ENCODE measurements at regions of chr2 and their contacts with region 1.

Region 1: DNA sequence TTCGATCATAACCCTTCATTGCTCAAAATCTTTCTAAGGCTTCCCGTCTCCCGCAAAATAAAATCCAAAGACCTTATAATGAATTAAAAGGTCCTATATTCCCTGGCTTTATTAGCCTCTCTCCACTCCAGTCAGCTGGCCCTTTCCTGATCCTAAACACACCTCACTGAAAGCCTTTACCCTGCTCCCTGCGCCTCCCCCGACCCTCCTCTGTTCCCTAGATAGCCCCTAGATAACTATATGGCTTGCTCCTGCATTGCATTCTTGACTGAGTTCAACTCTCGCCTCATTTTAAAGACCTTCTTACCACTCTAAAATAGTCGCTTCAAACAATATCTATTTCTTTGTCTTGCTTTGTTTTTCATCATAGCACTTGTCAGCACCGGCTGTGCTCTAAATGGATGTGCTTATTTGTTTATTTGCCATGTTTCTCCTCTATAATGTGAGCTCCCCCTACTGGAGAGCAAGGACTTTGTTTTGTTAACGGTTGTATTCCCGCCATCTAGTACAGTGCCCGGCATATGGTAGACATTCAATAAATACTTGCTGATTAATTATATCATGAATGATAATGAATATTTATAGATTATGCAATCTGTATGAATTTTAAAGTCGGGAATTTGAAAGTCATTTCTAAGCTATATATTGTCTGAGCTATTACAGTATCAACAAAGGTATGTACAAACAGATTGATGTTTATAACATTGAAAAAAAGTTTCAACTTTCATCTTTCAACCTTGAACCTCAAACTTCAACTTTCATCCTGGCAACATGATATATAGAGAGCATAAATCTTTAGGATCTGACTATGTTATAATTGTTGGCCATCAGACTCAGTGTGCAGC is 32.4 kb upstream of the VIT start:
- DNase-seq: no peak
- H3K4me3 ChIP-seq: peak overlapping the region in 2 of 4 experiments; percentile 21 to 49; a peak in 2 of 8 replicates
- H3K27ac ChIP-seq: no peak overlapping the region
- H3K4me1 ChIP-seq: peaks cover 0 to 4% (median 2%) of the 10 kb centered on the region in 4 experiments; a peak in 1 of 7 replicates
- H3K27me3 ChIP-seq: no peaks in the 10 kb centered on the region
- CTCF ChIP-seq: peak in 2 of 3 experiments; percentile 68 to 74; a peak in 3 of 4 replicates
- EP300 ChIP-seq: no peak
- POLR2A ChIP-seq: no peak
- RAD21 ChIP-seq: peak; percentile 88 to 89

Region 2: GRCh38 chr2:36287363-36288275 is 376.5 kb before region 1 on chr2:
- CTCF ChIA-PET with region 1: no interaction called
- POLR2A ChIA-PET with region 1: no interaction called
- DNase-seq: no peak
- H3K4me3 ChIP-seq: no peak overlapping the region
- H3K27ac ChIP-seq: no peak overlapping the region
- H3K4me1 ChIP-seq: peaks cover 0 to 4% (median 1%) of the 10 kb centered on the region in 4 experiments; a peak in 2 of 7 replicates
- H3K27me3 ChIP-seq: no peaks in the 10 kb centered on the region
- CTCF ChIP-seq: no peak
- EP300 ChIP-seq: no peak
- POLR2A ChIP-seq: no peak
- RAD21 ChIP-seq: no peak

Region 3: DNA sequence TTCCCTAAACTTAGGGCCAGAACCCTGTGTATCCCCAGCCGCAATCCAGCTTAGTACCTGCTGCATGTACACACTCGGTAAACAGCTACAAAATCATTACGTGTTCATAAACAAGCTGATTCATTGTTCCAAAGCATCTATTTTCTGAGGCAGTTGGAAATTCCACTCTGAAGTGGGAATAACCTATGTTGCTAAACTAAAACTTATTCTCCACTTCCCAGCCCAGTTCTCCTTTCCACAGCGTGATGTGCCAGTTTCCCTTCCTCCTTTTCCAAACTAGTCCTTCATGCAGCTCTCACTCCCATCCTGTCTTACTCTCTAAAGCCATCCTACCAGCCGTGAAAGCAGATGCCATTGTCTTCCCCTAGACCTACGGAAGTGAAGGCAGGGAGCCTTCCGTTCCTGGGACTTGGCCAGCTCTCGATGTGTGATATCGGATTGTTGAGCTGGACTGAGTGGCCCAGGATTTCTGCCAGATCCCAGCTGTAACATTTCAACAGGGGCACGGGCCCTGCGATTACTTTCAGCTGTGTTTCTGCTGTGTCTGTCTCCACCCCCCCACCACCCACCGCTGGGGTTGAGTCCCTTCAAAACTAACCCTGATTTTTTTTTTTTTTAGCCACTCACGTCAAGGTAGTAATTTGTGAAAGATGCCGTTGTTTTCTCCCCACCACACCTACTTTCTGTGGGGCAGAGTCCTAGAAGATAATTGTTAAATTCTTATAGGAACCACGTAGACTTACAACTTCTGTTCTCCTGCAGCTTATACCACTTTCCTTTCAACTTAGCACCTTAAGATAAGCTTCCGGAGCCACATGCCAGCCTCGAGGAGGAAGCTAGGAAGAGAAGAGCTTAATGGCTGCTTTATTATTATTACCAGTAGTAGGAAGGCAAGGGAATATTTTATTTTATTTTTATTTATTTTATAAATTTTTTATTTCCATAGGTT is 207.6 kb before region 1 on chr2:
- CTCF ChIA-PET with region 1: no interaction called
- POLR2A ChIA-PET with region 1: no interaction called
- DNase-seq: no peak
- H3K4me3 ChIP-seq: no peak overlapping the region; a peak in 1 of 8 replicates
- H3K27ac ChIP-seq: no peak overlapping the region
- H3K4me1 ChIP-seq: peaks cover 7 to 32% (median 32%) of the 10 kb centered on the region in 4 experiments
- H3K27me3 ChIP-seq: no peaks in the 10 kb centered on the region
- CTCF ChIP-seq: no peak
- EP300 ChIP-seq: no peak
- POLR2A ChIP-seq: no peak
- RAD21 ChIP-seq: no peak

Region 4: DNA sequence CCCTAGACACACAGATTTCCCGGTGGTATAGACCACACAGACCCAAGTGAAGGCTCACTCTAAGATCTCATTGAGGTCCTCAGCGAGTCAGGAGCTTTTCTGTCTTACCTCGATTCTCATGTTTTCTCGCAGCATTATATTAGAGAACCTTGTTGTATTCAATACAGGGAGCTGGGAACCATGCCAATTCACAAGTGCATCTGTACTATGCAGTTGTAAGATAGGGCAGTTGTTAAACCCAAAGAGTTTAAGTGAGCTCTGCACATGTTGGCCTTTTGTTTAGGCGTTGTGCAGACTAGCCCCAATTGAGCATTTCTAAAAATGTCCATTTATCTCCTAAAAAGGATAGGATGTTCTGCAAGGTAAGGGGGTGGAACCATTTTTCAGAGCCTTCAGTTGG is 125.7 kb before region 1 on chr2:
- CTCF ChIA-PET with region 1: interaction called, 14 read pairs
- POLR2A ChIA-PET with region 1: no interaction called
- DNase-seq: no peak
- H3K4me3 ChIP-seq: no peak overlapping the region
- H3K27ac ChIP-seq: no peak overlapping the region
- H3K4me1 ChIP-seq: no peaks in the 10 kb centered on the region
- H3K27me3 ChIP-seq: no peaks in the 10 kb centered on the region
- CTCF ChIP-seq: no peak
- EP300 ChIP-seq: no peak
- POLR2A ChIP-seq: no peak
- RAD21 ChIP-seq: no peak

Region 5: DNA sequence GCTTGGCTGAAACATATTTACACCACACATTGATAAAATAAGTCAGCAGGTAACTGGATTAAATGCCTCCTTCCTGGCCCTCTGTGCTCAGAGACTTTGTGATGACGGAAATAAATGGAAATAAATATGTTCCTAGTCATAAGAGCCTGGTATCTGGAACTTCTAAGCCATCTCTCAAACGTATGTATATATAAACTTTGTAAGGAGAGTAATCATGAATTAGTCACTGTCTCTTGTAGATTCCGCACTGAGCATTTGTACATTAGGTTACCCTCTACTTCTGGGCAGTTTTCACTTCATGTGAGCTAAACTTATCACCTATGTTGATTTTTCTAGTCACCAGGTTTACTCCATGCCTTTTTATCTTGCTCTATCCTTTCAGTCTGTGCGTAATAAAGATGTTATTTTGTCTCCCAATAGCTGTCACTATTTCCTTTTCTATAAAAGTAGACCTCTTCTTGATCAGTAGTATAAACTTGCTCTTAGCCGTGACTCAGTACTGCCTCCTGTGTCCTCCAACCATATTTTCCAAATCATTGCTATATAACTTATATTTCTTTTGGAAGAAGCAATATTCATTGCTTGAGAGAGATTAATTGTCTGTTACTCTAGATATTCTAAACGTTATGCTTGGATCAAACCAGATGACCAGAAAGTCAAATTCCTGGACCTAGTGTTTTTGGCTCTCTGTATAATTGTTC is 119.3 kb before region 1 on chr2:
- CTCF ChIA-PET with region 1: interaction called, 17 read pairs
- POLR2A ChIA-PET with region 1: no interaction called
- DNase-seq: no peak
- H3K4me3 ChIP-seq: no peak overlapping the region
- H3K27ac ChIP-seq: no peak overlapping the region
- H3K4me1 ChIP-seq: no peaks in the 10 kb centered on the region
- H3K27me3 ChIP-seq: no peaks in the 10 kb centered on the region
- CTCF ChIP-seq: peak in 1 of 3 experiments; percentile 33; a peak in 2 of 4 replicates
- EP300 ChIP-seq: no peak
- POLR2A ChIP-seq: no peak
- RAD21 ChIP-seq: peak; percentile 23 to 38; a peak in 2 of 4 replicates

Region 6: DNA sequence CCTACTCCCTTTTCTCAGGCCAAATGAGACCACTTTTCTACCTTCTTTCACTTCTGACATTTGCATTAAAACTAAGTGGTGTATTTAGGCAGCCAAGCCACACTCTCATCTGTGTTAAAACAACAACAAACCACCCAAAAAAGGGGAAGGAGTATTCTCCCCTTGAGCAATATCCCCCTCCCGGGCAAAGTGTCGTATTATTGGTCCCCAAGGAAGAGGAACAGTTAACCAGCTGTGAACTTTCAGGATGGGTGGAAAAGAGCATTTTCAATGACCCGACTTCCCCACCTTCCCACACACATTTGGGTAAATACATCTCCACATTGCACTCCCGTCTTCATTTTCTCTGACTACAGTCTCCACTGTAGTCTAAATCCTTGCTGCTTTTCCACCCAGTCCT is 110.4 kb before region 1 on chr2:
- CTCF ChIA-PET with region 1: interaction called, 15 read pairs
- POLR2A ChIA-PET with region 1: interaction called, 4 read pairs
- DNase-seq: no peak
- H3K4me3 ChIP-seq: no peak overlapping the region
- H3K27ac ChIP-seq: no peak overlapping the region
- H3K4me1 ChIP-seq: peaks cover 0 to 2% (median 0%) of the 10 kb centered on the region in 4 experiments; a peak in 1 of 7 replicates
- H3K27me3 ChIP-seq: no peaks in the 10 kb centered on the region
- CTCF ChIP-seq: no peak
- EP300 ChIP-seq: no peak
- POLR2A ChIP-seq: no peak
- RAD21 ChIP-seq: no peak

Region 7: GRCh38 chr2:36561237-36561944 is 102.7 kb before region 1 on chr2:
- CTCF ChIA-PET with region 1: interaction called, 14 read pairs
- POLR2A ChIA-PET with region 1: interaction called, 4 read pairs
- DNase-seq: peak in 1 of 2 experiments; percentile 17
- H3K4me3 ChIP-seq: no peak overlapping the region
- H3K27ac ChIP-seq: no peak overlapping the region
- H3K4me1 ChIP-seq: peaks cover 0 to 7% (median 2%) of the 10 kb centered on the region in 4 experiments; a peak in 4 of 7 replicates
- H3K27me3 ChIP-seq: no peaks in the 10 kb centered on the region
- CTCF ChIP-seq: no peak
- EP300 ChIP-seq: no peak
- POLR2A ChIP-seq: no peak
- RAD21 ChIP-seq: no peak

Region 8: DNA sequence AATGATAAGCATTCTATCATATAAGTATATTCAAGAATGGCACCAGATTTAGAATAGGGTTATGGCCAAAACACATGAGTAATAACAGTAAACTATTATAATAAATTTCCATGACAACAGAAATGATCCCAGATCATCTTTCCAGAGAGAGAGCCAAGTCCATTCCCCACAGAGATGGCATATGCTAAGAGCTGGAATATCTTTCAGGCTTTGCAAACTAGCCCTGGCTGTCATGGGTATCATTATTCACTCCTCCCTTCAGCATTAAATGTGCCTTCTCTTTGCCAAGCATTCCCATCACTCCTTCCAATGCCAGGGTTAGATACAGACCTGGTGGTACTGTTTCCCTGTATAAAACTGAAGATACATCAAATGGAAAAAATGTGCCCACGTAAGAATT is 77.0 kb before region 1 on chr2:
- CTCF ChIA-PET with region 1: interaction called, 10 read pairs
- POLR2A ChIA-PET with region 1: no interaction called
- DNase-seq: no peak
- H3K4me3 ChIP-seq: no peak overlapping the region
- H3K27ac ChIP-seq: no peak overlapping the region
- H3K4me1 ChIP-seq: no peaks in the 10 kb centered on the region
- H3K27me3 ChIP-seq: peaks cover 0 to 1% (median 0%) of the 10 kb centered on the region in 4 experiments; a peak in 1 of 7 replicates
- CTCF ChIP-seq: no peak
- EP300 ChIP-seq: no peak
- POLR2A ChIP-seq: no peak
- RAD21 ChIP-seq: no peak

Region 9: DNA sequence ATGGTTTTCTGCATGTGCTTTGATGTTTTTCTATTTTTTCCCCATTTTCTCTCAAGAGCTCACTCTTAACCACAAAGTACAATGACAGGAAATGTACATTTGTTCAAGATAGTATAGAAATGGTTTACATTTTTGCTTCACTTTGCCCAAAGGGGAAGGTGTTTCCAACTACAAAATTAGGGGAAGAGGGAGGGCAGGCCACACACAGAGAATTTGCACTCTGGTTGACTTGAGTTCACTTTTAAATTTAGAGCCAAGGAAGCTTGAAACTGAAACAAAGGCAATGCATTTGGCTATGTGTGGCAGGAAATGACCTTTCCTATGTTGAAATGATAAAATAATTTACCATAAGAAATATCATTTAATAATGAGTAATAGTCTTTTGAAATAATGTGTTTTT is 13.3 kb after region 1 on chr2:
- CTCF ChIA-PET with region 1: interaction called, 13 read pairs
- POLR2A ChIA-PET with region 1: no interaction called
- DNase-seq: no peak
- H3K4me3 ChIP-seq: no peak overlapping the region
- H3K27ac ChIP-seq: no peak overlapping the region
- H3K4me1 ChIP-seq: peaks cover 0 to 3% (median 1%) of the 10 kb centered on the region in 4 experiments; a peak in 2 of 7 replicates
- H3K27me3 ChIP-seq: no peaks in the 10 kb centered on the region
- CTCF ChIP-seq: no peak
- EP300 ChIP-seq: no peak
- POLR2A ChIP-seq: no peak
- RAD21 ChIP-seq: no peak

Measured in H1 (cell line).